ENCODE measurements at regions of chr1 and their contacts with region 1.

Region 1: GRCh38 chr1:96973605-96974004 is 252.0 kb downstream of the PTBP2 start:
- DNase-seq: peak; percentile 79
- ATAC-seq: 0 out of 2 replicates have a peak, but pooled peaks have one; percentile 19
- H3K4me3 ChIP-seq: no peak overlapping the region
- H3K27ac ChIP-seq: 0 out of 2 replicates have a peak overlapping the region, but pooled peaks have one; percentile 7
- H3K4me1 ChIP-seq: peaks cover 17% of the 10 kb centered on the region
- H3K27me3 ChIP-seq: no peaks in the 10 kb centered on the region
- CTCF ChIP-seq: no peak

Region 2: DNA sequence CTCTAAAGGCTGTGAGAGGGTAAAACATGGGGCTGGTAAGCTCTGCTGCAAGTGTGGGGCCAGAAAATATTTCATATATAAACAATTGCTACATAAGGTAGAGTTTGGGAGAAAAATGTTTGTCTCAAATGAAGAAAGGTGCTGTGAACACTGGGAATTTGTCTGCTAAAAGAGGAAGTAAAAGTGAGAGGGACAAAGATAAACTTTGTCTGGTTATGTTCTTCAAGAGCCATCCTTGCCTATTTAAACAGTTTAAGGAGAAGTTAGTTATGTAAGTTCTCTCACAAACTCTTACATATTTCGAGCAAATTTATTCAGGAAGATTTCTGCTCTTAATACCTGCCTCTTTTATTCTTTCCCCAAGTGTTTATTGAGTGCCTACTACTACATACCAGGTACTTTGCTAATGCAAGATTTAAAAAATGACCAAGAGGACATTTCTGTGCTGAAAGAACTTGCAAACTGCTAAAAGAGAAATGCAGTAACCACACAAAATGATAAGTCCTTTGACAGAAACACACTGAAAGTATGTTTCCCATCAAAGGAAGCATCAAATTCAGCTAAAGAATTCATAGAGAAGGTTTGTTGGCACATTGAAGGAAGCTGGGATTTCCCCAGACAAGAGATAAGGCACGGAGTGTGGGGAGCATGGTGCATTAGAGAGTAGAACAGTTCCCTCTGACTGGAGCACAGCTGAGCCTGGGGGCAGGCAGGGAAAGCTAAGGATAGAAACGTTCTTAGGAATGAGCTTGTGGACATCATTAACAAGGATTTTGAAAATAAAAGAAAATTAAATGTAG is 297.1 kb after region 1 on chr1:
- CTCF ChIA-PET with region 1: no interaction called
- POLR2A ChIA-PET with region 1: interaction called, 18 read pairs
- intact Hi-C with region 1: no loop called
- DNase-seq: no peak
- ATAC-seq: no peak
- H3K4me3 ChIP-seq: no peak overlapping the region
- H3K27ac ChIP-seq: no peak overlapping the region
- H3K4me1 ChIP-seq: peaks cover 10% of the 10 kb centered on the region
- H3K27me3 ChIP-seq: no peaks in the 10 kb centered on the region
- CTCF ChIP-seq: no peak

Region 3: DNA sequence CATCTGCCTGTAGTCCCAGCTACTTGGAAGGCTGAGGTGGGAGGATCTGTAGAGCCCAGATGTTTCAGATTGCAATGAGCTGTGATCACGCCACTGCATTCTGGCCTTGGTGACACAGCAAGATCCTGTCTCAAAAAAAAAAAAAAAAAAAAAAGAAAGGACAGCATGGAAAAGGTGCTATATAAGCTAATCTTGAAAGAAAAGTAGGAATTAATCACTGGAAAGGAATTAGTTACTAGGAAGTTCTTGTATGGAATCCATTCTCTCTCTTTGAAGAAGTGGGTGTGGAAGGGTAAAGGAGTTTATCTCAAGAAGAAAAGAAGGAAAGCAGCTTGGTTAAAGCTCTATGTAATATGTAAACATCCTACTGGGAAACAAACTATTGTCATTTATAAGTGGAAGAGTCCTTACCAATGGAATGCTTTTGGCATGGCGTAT is 608.0 kb after region 1 on chr1:
- CTCF ChIA-PET with region 1: no interaction called
- POLR2A ChIA-PET with region 1: no interaction called
- intact Hi-C with region 1: no loop called
- DNase-seq: peak; percentile 6
- ATAC-seq: no peak
- H3K4me3 ChIP-seq: no peak overlapping the region
- H3K27ac ChIP-seq: no peak overlapping the region
- H3K4me1 ChIP-seq: no peaks in the 10 kb centered on the region
- H3K27me3 ChIP-seq: no peaks in the 10 kb centered on the region
- CTCF ChIP-seq: no peak

Region 4: DNA sequence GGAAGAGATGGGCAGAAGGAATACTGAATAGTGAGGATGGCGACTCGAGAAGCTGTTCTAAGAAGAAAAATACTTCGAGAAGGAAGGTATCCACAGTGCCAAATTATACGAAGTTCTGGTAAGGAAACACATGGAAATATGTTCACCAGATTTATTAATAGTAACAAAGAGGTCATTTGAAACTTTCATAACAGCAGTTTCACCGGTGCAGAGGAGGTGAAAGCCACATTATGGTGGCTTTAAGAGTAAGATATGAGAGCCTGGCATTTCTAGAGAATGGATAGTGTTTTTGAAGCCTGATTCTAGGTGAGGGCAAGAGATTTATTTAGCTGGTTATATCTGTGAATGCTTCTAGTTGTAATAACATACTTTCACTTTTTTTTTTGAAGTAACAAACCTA is 891.0 kb after region 1 on chr1:
- CTCF ChIA-PET with region 1: no interaction called
- POLR2A ChIA-PET with region 1: no interaction called
- intact Hi-C with region 1: no loop called
- DNase-seq: no peak
- ATAC-seq: no peak
- H3K4me3 ChIP-seq: no peak overlapping the region
- H3K27ac ChIP-seq: no peak overlapping the region
- H3K4me1 ChIP-seq: no peaks in the 10 kb centered on the region
- H3K27me3 ChIP-seq: no peaks in the 10 kb centered on the region
- CTCF ChIP-seq: no peak